Activated CD4-positive, alpha-beta memory T cell treated with anti-CD3 and anti-CD28 coated beads for 36 hours (primary cell): ENCODE measurements at regions of chr4 and their contacts with region 1.

Region 1: DNA sequence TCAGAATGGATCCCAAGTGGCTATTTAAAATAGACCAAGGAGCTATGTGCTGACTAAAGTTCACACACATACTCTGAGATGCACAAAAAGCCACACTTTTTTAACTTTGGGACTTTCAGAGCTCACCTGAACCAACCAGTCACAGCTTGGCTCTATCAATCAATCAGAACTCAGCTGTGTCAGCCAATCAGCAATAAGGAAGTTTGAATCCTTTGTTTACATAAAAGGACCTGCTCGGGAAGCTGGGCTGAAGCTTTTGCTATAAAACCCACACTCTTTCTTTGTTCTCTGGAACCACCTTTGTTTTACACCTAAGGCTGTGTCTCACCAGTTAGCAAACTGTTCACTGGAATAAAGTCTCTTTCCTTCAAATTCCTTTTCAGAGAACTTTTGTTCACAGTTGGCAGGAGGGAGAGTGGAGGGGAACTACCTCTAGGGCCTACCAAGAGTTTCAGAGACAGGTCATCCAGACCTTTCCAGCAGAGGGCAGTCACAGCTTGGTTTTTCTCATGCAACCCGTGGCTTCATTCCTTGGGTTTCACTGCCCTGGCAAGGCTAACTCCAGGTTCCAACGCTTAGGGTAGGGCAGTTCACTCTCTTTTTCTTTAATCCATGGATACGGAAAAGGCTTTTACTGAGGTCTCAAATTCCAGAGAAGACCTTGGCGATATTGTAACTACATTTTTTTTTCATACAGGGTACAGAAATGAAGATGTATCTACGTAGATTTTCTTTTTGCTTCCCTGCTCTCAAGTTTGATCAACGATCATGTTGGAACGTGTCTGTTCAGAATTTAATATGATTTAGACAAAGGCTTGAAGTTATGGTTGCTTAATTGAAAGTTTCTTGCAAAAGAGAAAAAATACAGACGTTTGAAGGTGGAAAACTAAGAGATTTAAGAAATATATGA is 80.7 kb downstream of the GPRIN3 start:
- DNase-seq: peak; percentile 82
- H3K4me3 Mint-ChIP-seq: peak overlapping the region; percentile 57
- H3K27ac Mint-ChIP-seq: no peak overlapping the region
- H3K4me1 Mint-ChIP-seq: peaks cover 16% of the 10 kb centered on the region
- H3K27me3 Mint-ChIP-seq: peaks cover 2% of the 10 kb centered on the region

Region 2: DNA sequence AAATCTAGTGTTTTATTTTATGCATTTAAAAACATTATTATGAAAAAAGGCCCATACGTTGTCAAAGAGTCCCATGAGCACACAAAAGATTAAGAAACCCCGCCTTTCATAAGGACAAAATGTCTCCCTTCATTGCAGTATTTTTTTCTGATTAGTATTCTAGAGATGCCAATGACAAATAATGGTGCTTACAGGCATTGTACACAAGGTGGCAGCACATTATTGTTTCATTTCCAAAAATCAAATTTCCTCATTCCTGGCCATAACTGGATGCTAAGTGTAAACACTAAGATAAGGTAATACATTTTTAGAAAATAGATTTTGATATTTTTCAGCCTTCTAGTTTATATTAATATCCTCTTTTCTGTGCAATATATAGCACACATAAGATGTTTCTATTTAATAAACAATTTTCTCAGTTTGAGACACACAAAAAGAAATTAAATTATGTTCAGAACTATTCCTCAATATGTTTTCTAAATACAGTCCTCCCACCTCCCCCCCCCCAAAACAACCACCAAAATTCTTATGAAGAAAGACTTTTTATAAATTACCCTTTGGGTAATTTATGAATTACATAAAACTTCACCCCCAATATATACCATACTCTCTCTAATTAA is 67.9 kb before region 1 on chr4:
- CTCF ChIA-PET with region 1: interaction called, 19 read pairs
- POLR2A ChIA-PET with region 1: no interaction called
- intact Hi-C with region 1: loop called (anchors 1 kb)
- DNase-seq: no peak
- H3K4me3 Mint-ChIP-seq: no peak overlapping the region
- H3K27ac Mint-ChIP-seq: no peak overlapping the region
- H3K4me1 Mint-ChIP-seq: no peaks in the 10 kb centered on the region
- H3K27me3 Mint-ChIP-seq: peaks cover 5% of the 10 kb centered on the region

Region 3: DNA sequence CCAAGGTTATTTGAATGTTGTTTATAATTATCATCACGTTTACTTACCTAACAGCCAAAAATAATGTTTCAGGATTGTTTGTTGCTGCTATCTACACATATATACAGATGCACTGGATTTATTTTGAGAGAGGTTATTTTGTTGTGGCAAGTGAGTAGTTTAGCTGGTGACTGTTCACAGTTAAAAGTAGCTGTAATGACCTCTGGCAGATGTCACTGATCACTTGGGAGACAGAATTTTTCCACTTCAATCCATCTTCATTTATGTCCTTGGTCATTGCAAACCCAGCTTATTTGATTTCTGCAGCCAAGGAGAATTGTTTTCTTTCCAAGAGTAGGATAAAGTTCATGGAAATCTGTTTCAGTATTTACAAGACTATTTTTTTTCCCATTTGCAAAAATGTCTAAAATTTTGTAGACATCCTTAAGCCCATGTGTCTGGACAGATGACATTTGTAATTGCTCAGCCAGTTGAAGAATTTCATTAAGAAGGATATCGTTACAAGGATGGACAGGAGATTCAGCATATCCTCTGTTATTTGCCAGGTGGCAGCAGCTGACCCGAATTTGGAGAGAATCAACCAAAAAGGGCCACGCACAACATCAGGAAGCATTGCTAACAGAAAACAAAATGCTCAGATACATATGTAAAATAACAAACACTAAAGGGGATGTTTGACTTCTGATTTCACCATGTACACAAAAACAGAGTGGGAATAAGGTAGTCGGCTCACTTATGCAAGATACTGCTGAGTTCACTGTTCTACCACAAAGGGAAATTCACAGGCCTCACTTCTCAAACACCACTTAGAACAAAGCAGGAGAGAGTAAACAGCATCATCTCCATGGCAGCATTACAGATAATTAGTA is 16.2 kb after region 1 on chr4:
- CTCF ChIA-PET with region 1: interaction called, 10 read pairs
- POLR2A ChIA-PET with region 1: no interaction called
- intact Hi-C with region 1: no loop called
- DNase-seq: no peak
- H3K4me3 Mint-ChIP-seq: no peak overlapping the region
- H3K27ac Mint-ChIP-seq: peak overlapping the region; percentile 70
- H3K4me1 Mint-ChIP-seq: peaks cover 51% of the 10 kb centered on the region
- H3K27me3 Mint-ChIP-seq: no peaks in the 10 kb centered on the region

Region 4: GRCh38 chr4:89254847-89255246 is 27.9 kb after region 1 on chr4:
- CTCF ChIA-PET with region 1: interaction called, 11 read pairs
- POLR2A ChIA-PET with region 1: no interaction called
- intact Hi-C with region 1: no loop called
- DNase-seq: peak; percentile 59
- H3K4me3 Mint-ChIP-seq: no peak overlapping the region
- H3K27ac Mint-ChIP-seq: peak overlapping the region; percentile 15
- H3K4me1 Mint-ChIP-seq: peaks cover 78% of the 10 kb centered on the region
- H3K27me3 Mint-ChIP-seq: no peaks in the 10 kb centered on the region

Region 5: GRCh38 chr4:89434364-89434988 is 207.6 kb after region 1 on chr4:
- CTCF ChIA-PET with region 1: interaction called, 76 read pairs
- POLR2A ChIA-PET with region 1: no interaction called
- intact Hi-C with region 1: loop called (anchors 1 kb)
- DNase-seq: no peak
- H3K4me3 Mint-ChIP-seq: no peak overlapping the region
- H3K27ac Mint-ChIP-seq: no peak overlapping the region
- H3K4me1 Mint-ChIP-seq: peaks cover 12% of the 10 kb centered on the region
- H3K27me3 Mint-ChIP-seq: no peaks in the 10 kb centered on the region